ENCODE measurements at regions of chr6 and their contacts with region 1.

Region 1: DNA sequence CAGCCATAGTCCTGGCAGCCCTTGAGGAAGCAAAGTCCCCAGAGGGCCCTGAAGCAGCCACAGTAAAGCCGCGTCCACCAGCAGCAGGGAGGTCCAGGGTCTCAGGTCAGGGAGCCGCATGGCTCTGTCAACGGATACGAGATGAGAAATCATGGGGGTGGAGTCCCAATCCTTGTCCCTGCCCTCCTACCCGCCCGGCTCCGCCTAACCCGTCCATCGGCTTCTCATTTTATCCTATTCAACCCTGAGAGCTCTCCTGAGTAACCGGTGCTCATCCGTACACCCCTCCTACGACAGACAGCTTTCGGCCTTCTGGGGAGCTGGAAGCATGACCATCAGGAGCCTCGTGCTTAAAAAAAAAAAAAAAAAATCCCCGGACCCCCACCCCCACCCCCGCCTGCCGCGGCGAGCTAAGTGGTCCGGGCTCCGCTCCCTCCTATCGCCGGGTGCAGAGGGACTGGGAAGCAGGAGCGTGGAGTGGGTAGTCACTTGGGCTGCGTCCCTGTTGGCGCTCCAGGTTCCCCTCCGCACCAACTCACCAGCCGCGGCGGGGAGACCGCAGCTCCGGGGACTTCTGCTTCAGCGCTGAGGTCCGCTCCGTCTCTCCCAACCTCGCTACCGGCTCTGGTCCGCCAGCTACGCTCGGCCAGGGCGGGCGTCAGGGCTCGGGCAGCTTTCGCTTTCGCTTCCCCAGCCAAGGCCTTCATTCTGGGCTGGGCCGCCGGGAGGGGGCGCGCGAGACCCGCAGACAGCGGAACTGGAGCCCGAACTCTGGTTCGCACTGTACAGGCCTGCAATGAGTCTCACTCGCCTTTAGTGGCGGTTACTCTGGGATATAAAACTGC is at the start of gene TAP2:
- DNase-seq: peak; percentile 98
- ATAC-seq: peak; percentile 98
- total RNA-seq, gene TAP2: 19.3 TPM

Region 2: GRCh38 chr6:32853541-32854375 is 15.4 kb after region 1 on chr6 and contains the starts of genes PSMB9 and TAP1:
- intact Hi-C with region 1: loop called (anchors 2 kb)
- DNase-seq: peak; percentile 97
- ATAC-seq: peak; percentile 97
- total RNA-seq, gene PSMB9: 12.6 TPM
- total RNA-seq, gene TAP1: 14.9 TPM

Region 3: DNA sequence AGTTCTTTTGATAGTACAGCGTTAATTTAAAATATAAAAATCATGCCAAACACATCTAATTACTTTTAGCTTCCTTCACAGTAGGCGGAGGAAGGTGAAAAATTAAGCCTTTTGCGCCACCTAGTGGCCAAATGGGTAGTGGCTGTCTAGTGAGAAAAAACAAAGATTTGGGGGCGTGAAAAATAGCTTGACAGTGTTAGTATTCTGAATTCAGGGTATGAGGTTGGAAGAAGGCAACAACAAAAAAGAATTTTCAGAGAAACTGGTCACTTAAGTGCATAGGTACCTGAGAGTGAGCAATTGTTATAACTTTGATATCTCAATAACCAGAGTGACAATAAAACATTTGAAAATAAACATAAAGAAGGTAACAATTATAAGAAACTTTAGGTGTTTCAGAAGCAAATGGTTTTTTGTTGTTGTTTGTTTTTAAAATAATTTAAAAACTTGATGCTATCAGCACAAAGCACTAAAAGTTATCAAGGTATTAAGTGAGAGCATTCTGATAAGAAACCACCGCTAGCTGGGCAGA is 30.0 kb after region 1 on chr6:
- intact Hi-C with region 1: loop called (anchors 5 kb)
- DNase-seq: peak; percentile 82
- ATAC-seq: peak; percentile 83

Region 4: DNA sequence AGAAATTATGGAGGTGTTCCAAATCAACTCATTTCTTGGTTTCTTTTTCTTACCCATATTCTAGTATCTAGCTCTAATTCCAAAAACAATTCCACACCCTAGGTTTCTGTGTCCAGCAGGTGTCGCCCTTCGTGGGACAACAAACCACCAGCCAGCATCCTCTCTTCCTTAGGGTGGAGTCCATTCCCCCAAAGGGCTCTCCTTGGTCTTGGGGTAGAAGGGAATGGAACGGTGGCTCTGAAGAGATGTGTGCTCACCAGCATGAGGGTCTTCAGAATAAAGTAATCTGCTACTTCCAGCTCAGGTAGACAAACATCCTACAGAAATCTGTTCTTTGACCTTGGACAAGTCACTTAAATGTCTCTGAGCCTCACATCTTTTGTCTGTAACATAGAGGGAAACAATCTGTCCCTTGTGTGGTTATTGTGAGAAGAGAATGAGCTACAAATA is 95.3 kb after region 1 on chr6:
- intact Hi-C with region 1: no loop called
- DNase-seq: peak; percentile 81
- ATAC-seq: peak; percentile 77

Region 5: DNA sequence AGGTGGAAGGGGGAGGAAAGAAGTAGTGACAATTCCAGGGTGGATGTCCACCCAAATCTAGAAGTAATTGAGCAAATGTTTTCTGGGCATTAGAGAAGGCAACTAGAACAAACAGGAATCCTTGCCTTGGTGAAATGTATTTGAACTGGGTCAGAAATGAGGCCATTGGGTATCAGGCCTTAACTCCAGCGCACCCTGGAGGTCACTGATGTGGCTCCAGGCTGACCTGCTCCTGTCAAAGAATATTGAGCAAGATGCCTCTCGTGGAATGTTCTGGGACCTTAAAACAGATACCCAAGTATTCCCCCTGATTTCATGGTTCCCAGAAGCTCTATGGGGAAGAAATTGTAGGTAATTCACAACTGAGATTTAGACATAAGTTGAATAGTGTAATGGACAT is 244.4 kb after region 1 on chr6:
- intact Hi-C with region 1: no loop called
- DNase-seq: peak; percentile 61
- ATAC-seq: no peak

Measured in Right ventricle myocardium superior (tissue), 1 donor.